ENCODE measurements at regions of chr5 and their contacts with region 1.

Region 1: DNA sequence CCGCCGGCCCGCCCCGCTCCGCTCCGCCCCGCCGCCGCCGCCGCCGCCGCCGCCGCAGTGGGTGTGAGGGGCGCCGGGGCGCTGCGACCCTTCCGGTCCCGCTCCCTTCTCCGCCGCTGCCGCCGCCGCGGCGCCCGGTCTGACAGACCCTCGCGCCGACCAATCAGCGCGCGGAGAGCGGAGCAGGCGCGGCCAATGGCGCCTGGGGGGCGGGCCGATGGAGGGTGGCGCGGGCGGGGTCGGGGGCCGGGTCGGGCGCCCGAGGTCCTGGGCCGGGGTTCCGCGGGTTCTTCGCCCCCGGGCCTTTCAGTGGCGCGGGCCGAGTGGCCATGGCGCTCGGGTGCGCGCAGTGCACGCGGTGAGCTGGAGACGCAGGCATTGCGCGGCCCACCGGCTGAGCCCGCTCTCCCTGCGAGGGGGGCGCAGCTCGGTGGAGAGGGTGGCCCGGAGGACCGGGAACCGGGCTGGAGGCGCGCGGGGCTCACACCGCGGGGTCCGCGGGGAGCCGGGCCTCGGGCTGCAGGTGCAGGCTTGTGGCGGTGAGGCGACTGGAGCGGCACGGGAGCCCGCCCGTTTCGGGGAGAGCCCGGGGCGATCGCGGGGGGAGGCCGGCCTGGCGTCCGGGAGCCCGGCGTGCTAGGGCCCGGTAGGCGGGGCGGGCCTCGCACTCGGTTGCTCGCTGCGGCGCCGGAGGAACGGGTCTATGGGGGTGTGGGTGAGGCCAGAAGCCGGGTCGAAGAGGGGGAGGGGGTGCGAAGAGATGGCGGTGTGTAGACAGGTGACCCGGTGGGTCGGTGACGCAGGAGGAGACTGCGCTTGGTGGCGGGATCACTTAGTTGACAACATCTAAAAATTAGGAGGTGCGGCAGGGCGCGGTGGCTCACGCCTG is at the start of gene MAPK9:
- DNase-seq: peak; percentile 89
- H3K4me3 Mint-ChIP-seq: peak within 1 kb of the TSS; percentile 71
- H3K27ac Mint-ChIP-seq: peak within 1 kb of the TSS; percentile 81
- H3K4me1 Mint-ChIP-seq: peaks cover 52% of the 10 kb centered on the region
- H3K27me3 Mint-ChIP-seq: no peaks in the 10 kb centered on the region
- CTCF ChIP-seq: no peak
- total RNA-seq, gene MAPK9: 64.0 and 70.8 TPM in 2 replicates

Region 2: DNA sequence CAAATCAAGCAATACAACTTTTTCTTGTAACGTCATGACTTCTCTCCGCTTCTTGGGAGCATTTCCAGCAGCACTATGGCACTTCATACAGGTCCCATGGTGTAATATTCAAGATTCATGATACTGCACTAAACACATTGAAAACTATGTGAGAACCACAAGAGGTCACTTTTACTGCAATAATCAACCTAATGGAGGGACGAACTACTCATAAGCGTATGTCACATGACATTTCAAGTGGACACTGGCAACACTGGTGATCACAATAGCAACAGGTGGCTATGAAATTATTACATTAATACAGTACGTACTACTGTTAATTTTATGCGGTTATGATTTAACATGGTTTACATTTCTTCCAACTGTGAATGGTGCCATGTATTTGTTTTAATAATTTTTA is 305.9 kb before region 1 on chr5:
- CTCF ChIA-PET with region 1: no interaction called
- POLR2A ChIA-PET with region 1: no interaction called
- intact Hi-C with region 1: no loop called
- DNase-seq: peak; percentile 9
- H3K4me3 Mint-ChIP-seq: no peak overlapping the region
- H3K27ac Mint-ChIP-seq: no peak overlapping the region
- H3K4me1 Mint-ChIP-seq: no peaks in the 10 kb centered on the region
- H3K27me3 Mint-ChIP-seq: no peaks in the 10 kb centered on the region
- CTCF ChIP-seq: no peak

Region 3: GRCh38 chr5:180161420-180162303 is 130.5 kb before region 1 on chr5:
- CTCF ChIA-PET with region 1: no interaction called
- POLR2A ChIA-PET with region 1: no interaction called
- intact Hi-C with region 1: no loop called
- DNase-seq: no peak
- H3K4me3 Mint-ChIP-seq: no peak overlapping the region
- H3K27ac Mint-ChIP-seq: no peak overlapping the region
- H3K4me1 Mint-ChIP-seq: no peaks in the 10 kb centered on the region
- H3K27me3 Mint-ChIP-seq: peaks cover 70% of the 10 kb centered on the region
- CTCF ChIP-seq: no peak

Region 4: GRCh38 chr5:180235846-180236245 is 56.3 kb before region 1 on chr5:
- CTCF ChIA-PET with region 1: interaction called, 6 read pairs
- POLR2A ChIA-PET with region 1: interaction called, 12 read pairs
- intact Hi-C with region 1: no loop called
- DNase-seq: peak; percentile 38
- H3K4me3 Mint-ChIP-seq: no peak overlapping the region
- H3K27ac Mint-ChIP-seq: no peak overlapping the region
- H3K4me1 Mint-ChIP-seq: peaks cover 6% of the 10 kb centered on the region
- H3K27me3 Mint-ChIP-seq: no peaks in the 10 kb centered on the region
- CTCF ChIP-seq: no peak

Region 5: GRCh38 chr5:180315762-180316212 is 23.6 kb after region 1 on chr5:
- CTCF ChIA-PET with region 1: interaction called, 73 read pairs
- POLR2A ChIA-PET with region 1: interaction called, 4 read pairs
- intact Hi-C with region 1: loop called (anchors 1 kb)
- DNase-seq: peak; percentile 82
- H3K4me3 Mint-ChIP-seq: no peak overlapping the region
- H3K27ac Mint-ChIP-seq: no peak overlapping the region
- H3K4me1 Mint-ChIP-seq: no peaks in the 10 kb centered on the region
- H3K27me3 Mint-ChIP-seq: no peaks in the 10 kb centered on the region
- CTCF ChIP-seq: peak; percentile 95

Region 6: DNA sequence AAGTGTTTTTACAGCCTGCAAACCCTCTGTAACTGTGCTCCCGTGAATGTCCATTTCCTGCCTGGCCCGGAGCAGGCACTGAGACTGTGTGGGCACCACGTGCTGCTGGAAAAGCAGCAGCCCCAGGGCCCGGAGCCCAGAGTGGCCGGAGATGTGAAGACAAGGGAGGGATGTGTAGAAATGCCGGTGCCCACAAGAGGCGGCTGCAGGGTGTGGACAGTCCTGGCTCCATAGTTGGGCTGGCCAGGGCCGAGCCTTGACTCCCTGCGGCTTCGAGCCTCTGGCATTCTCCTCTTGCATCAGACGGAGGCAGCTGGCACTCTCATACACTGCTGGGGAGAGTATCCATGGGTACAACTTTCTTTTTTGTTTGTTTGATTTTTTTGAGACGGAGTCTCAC is 74.1 kb after region 1 on chr5:
- CTCF ChIA-PET with region 1: no interaction called
- POLR2A ChIA-PET with region 1: no interaction called
- intact Hi-C with region 1: no loop called
- DNase-seq: no peak
- H3K4me3 Mint-ChIP-seq: no peak overlapping the region
- H3K27ac Mint-ChIP-seq: no peak overlapping the region
- H3K4me1 Mint-ChIP-seq: no peaks in the 10 kb centered on the region
- H3K27me3 Mint-ChIP-seq: no peaks in the 10 kb centered on the region
- CTCF ChIP-seq: no peak

Region 7: GRCh38 chr5:180441563-180441962 is 149.4 kb after region 1 on chr5:
- CTCF ChIA-PET with region 1: interaction called, 10 read pairs
- POLR2A ChIA-PET with region 1: interaction called, 4 read pairs
- intact Hi-C with region 1: no loop called
- DNase-seq: peak; percentile 100
- H3K4me3 Mint-ChIP-seq: peak overlapping the region; percentile 58
- H3K27ac Mint-ChIP-seq: peak overlapping the region; percentile 88
- H3K4me1 Mint-ChIP-seq: peaks cover 15% of the 10 kb centered on the region
- H3K27me3 Mint-ChIP-seq: no peaks in the 10 kb centered on the region
- CTCF ChIP-seq: no peak

Region 8: DNA sequence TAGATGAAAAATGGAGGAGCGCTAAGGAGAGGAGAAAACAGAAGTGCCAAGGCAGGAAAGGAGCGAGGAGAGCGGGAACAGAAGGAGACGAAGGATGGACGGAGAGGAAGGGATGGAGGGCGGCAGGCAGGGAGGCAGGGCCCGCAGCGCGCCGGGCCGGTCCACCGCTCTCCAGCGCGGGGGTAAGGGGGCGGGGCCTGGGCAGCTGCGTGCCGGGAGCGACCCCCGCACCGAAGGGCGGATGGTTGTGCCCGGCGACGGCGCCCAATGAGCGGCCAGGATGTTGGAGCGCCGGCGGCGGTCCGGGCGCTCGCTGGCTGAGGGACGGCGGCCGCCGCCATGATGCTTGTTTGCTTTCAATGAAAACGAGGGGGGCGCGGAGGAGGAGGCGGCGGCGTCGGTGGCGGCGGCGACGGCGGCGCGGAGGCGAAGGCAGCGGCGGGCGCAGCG is 201.9 kb after region 1 on chr5 and contains the start of gene CNOT6:
- CTCF ChIA-PET with region 1: interaction called, 5 read pairs
- POLR2A ChIA-PET with region 1: interaction called, 11 read pairs
- intact Hi-C with region 1: no loop called
- DNase-seq: peak; percentile 96
- H3K4me3 Mint-ChIP-seq: peak within 1 kb of the TSS; percentile 80
- H3K27ac Mint-ChIP-seq: peak within 1 kb of the TSS; percentile 95
- H3K4me1 Mint-ChIP-seq: peaks cover 30% of the 10 kb centered on the region
- H3K27me3 Mint-ChIP-seq: no peaks in the 10 kb centered on the region
- CTCF ChIP-seq: no peak
- total RNA-seq, gene CNOT6: 67.0 and 73.1 TPM in 2 replicates

Region 9: GRCh38 chr5:180670586-180671359 is 378.6 kb after region 1 on chr5:
- CTCF ChIA-PET with region 1: no interaction called
- POLR2A ChIA-PET with region 1: no interaction called
- intact Hi-C with region 1: loop called (anchors 1 kb)
- DNase-seq: peak; percentile 75
- H3K4me3 Mint-ChIP-seq: no peak overlapping the region
- H3K27ac Mint-ChIP-seq: no peak overlapping the region
- H3K4me1 Mint-ChIP-seq: peaks cover 8% of the 10 kb centered on the region
- H3K27me3 Mint-ChIP-seq: peaks cover 13% of the 10 kb centered on the region
- CTCF ChIP-seq: peak; percentile 81

Region 10: GRCh38 chr5:180975338-180975737 is 683.2 kb after region 1 on chr5:
- CTCF ChIA-PET with region 1: no interaction called
- POLR2A ChIA-PET with region 1: no interaction called
- intact Hi-C with region 1: no loop called
- DNase-seq: no peak
- H3K4me3 Mint-ChIP-seq: no peak overlapping the region
- H3K27ac Mint-ChIP-seq: no peak overlapping the region
- H3K4me1 Mint-ChIP-seq: no peaks in the 10 kb centered on the region
- H3K27me3 Mint-ChIP-seq: no peaks in the 10 kb centered on the region
- CTCF ChIP-seq: no peak